SK-N-SH (cell line): ENCODE measurements at regions of chr1 and their contacts with region 1.

Region 1: DNA sequence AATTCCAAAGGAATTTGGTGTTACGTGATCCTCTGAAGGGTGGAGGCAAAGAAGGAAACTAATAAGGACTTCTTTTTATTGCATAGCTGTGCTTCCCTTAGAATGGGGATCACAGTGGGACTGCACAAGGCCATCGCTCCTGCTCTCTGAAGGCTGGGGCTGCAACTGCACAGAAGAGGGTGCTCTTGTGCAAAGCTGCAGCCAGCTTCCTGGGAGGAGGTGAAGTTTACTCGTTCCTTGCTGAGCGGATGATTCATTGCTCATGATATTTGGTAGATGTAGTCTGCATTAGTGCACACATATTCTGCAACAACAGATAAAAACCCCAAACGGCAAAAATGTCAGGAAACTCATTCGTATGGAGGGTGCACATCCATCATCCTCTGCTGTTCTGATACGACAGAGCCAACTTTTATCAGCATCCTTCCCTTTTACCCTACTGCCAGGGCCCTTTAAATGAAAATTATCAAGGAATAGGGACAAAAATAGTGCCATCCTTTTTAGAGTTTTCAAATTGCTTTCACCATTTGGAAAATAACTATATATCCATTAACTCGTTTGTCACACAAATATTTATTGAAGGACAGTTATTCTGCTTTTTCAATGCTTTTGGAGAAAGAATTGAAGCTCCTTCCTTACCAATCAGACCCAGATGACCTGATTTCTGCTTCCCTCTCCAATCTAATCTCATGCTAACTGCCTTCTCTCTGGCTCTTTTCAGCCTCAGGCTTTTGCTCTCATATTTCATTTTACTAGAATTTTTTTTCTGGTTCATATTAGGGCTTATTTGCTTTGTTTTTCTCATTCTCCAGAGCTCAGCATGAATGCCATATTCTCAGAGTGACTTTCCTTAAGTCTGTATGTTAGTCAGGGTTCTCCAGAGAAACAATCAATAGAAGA is 263.6 kb downstream of the DUSP10 start:
- DNase-seq: peak; percentile 58
- H3K4me3 ChIP-seq: peak overlapping the region in 1 of 2 experiments; percentile 4; a peak in 1 of 4 replicates
- H3K27ac ChIP-seq: peak overlapping the region in 1 of 2 experiments; percentile 76; a peak in 2 of 4 replicates
- H3K4me1 ChIP-seq: peaks cover 0 to 14% of the 10 kb centered on the region in 2 experiments; a peak in 2 of 4 replicates
- H3K27me3 ChIP-seq: no peaks in the 10 kb centered on the region
- CTCF ChIP-seq: peak; percentile 87
- EP300 ChIP-seq: peak in 1 of 2 experiments; percentile 48; a peak in 2 of 4 replicates
- RAD21 ChIP-seq: peak; percentile 93

Region 2: DNA sequence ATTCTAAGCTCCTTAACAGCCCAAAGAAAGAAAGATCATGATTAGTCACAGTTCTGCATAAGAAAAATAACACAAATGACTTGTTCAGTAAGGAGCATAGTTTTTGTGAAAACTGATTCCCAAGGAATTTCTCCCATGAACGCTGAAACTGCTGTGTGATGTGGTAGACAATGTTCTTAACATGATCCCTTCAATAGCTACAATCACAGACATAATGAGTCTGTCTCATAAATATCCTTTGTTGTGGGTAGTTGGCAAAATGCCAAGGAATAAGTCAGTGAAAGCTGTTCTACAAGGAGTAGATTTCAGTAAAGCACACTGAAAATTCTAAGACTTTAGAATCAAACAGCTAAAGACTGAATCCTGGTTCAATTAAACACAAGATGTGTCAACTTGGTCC is 194.3 kb before region 1 on chr1:
- CTCF ChIA-PET with region 1: no interaction called
- POLR2A ChIA-PET with region 1: no interaction called
- DNase-seq: peak; percentile 33
- H3K4me3 ChIP-seq: no peak overlapping the region
- H3K27ac ChIP-seq: peak overlapping the region in 1 of 2 experiments; percentile 28; a peak in 2 of 4 replicates
- H3K4me1 ChIP-seq: peaks cover 0 to 4% of the 10 kb centered on the region in 2 experiments; a peak in 2 of 4 replicates
- H3K27me3 ChIP-seq: no peaks in the 10 kb centered on the region
- CTCF ChIP-seq: no peak
- EP300 ChIP-seq: no peak
- RAD21 ChIP-seq: no peak

Region 3: GRCh38 chr1:221444346-221444745 is 34.0 kb before region 1 on chr1:
- CTCF ChIA-PET with region 1: no interaction called
- POLR2A ChIA-PET with region 1: no interaction called
- DNase-seq: no peak
- H3K4me3 ChIP-seq: no peak overlapping the region
- H3K27ac ChIP-seq: no peak overlapping the region
- H3K4me1 ChIP-seq: peaks cover 16 to 20% of the 10 kb centered on the region in 2 experiments; a peak in 3 of 4 replicates
- H3K27me3 ChIP-seq: no peaks in the 10 kb centered on the region
- CTCF ChIP-seq: no peak
- EP300 ChIP-seq: no peak
- RAD21 ChIP-seq: no peak

Region 4: DNA sequence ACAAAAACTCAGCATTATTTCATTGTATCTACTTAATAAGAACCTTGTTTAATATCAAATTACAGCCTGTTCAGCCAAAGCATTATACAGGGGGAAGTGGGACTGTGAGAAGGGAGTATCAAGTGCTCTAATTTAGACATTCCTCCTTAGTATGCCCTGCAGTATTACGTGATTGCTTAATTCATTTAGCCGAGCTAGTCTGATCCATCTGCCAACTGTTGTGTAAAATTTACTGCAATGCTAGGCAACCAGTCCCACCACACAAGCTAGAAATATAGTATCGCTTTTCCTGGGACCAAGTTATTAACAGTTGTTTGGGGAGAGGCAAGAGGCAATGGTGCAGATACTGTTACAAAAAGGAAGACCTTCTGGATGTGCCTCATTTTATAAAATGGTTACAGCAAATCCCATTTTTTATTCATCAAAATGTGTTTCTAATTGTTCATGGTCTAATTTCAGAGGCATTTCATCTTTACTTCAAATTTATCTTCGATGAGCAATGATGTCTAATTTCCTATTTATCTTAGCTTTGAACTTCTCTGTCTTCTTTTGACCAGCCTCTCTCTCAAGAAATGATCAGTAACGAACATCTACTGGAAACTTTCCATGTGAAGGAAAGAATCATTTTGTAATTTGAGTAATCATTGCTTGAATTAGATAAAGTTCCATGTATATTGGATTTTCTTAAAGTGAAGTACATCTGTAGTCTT is 19.7 kb before region 1 on chr1:
- CTCF ChIA-PET with region 1: interaction called, 12 read pairs
- POLR2A ChIA-PET with region 1: no interaction called
- DNase-seq: peak; percentile 44
- H3K4me3 ChIP-seq: peak overlapping the region in 1 of 2 experiments; percentile 6; a peak in 1 of 4 replicates
- H3K27ac ChIP-seq: peak overlapping the region; percentile 82 to 84
- H3K4me1 ChIP-seq: peaks cover 4 to 23% of the 10 kb centered on the region in 2 experiments; a peak in 2 of 4 replicates
- H3K27me3 ChIP-seq: no peaks in the 10 kb centered on the region
- CTCF ChIP-seq: no peak
- EP300 ChIP-seq: peak in 1 of 2 experiments; percentile 64; a peak in 3 of 4 replicates
- RAD21 ChIP-seq: no peak

Region 5: GRCh38 chr1:221497046-221497445 is 18.7 kb after region 1 on chr1:
- CTCF ChIA-PET with region 1: no interaction called
- POLR2A ChIA-PET with region 1: no interaction called
- DNase-seq: no peak
- H3K4me3 ChIP-seq: no peak overlapping the region
- H3K27ac ChIP-seq: no peak overlapping the region
- H3K4me1 ChIP-seq: no peaks in the 10 kb centered on the region; a peak in 1 of 4 replicates
- H3K27me3 ChIP-seq: no peaks in the 10 kb centered on the region
- CTCF ChIP-seq: no peak
- EP300 ChIP-seq: no peak
- RAD21 ChIP-seq: no peak

Region 6: DNA sequence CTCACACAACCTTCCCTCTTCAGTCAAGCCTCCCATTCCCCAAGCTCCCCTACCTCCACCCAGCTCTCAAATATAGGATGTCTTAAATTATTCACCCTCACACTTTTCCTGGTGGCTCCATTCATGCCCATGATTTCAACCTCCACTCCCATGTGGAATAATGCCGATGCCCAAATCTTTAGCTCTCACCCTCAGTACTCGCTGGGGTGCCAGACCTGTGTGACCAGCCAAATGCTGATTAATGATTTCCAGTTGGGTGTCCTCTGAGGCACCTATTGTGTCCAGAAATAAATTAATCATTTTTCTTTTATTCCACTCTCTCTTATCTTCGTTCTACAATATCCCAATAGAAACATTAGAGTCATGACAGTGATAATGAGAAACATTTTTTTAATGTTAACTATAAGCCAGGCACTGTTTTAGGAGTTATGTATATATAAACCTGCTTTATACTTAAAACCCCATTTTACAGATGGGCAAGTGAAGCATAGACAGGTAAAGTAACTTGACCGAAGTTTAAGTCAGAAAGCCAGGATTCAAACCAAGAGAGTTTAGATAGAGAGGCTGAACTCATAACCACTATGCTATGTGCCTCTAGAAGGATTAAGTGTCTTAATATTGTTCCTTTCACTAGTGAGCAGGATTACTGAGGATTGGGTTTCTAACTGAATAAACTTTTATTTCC is 53.9 kb after region 1 on chr1:
- CTCF ChIA-PET with region 1: no interaction called
- POLR2A ChIA-PET with region 1: no interaction called
- DNase-seq: no peak
- H3K4me3 ChIP-seq: no peak overlapping the region
- H3K27ac ChIP-seq: no peak overlapping the region
- H3K4me1 ChIP-seq: no peaks in the 10 kb centered on the region
- H3K27me3 ChIP-seq: no peaks in the 10 kb centered on the region
- CTCF ChIP-seq: no peak
- EP300 ChIP-seq: no peak
- RAD21 ChIP-seq: no peak

Region 7: DNA sequence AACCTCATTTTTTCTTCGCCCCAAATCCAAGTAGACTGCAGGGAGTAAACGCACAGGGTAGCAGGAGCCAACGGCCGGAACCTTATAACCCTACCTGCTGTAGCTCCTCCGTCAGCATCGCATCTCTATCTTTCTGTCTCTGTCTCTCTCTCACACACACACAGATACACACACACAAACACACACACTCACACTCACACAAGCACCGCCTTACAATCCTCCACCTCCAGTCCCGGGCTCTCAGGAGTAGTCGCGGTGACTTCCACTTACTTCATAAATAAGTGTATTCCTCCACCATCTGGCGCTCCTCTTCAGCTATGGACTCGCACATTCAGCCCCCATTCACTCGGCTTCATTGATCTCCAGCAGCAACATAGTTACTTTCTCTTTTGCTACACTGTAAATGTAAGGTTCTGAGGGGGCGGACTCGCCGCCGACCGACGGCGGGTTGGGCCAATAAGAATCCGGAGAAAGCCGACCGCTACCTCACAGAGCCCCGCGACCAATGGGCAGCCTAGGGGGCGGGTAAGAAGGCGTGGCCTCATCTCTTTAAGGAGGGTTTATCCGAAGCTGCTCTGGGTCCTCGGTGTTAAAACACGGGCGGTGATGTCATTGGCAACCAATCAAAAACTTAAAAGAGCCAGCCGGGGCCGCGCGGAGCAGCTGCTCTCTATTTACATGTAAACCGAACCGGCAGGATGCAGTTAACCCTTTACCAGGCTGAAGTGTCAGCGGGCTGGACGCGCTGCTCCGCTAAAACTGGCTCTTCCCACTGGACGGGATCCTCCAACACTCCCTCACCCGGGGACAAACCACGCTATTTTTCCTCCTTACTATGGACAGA is 263.6 kb after region 1 on chr1 and contains the start of gene DUSP10:
- CTCF ChIA-PET with region 1: interaction called, 20 read pairs
- POLR2A ChIA-PET with region 1: interaction called, 13 read pairs
- DNase-seq: peak; percentile 95
- H3K4me3 ChIP-seq: peak within 1 kb of the TSS; percentile 57 to 94
- H3K27ac ChIP-seq: peak within 1 kb of the TSS; percentile 96 to 98
- H3K4me1 ChIP-seq: peaks cover 0 to 19% of the 10 kb centered on the region in 2 experiments; a peak in 2 of 4 replicates
- H3K27me3 ChIP-seq: no peaks in the 10 kb centered on the region
- CTCF ChIP-seq: no peak
- EP300 ChIP-seq: peak; percentile 10 to 30; a peak in 1 of 4 replicates
- RAD21 ChIP-seq: peak; percentile 44
- polyA plus RNA-seq, gene DUSP10: 6.4 and 6.8 TPM in 2 replicates

Region 8: DNA sequence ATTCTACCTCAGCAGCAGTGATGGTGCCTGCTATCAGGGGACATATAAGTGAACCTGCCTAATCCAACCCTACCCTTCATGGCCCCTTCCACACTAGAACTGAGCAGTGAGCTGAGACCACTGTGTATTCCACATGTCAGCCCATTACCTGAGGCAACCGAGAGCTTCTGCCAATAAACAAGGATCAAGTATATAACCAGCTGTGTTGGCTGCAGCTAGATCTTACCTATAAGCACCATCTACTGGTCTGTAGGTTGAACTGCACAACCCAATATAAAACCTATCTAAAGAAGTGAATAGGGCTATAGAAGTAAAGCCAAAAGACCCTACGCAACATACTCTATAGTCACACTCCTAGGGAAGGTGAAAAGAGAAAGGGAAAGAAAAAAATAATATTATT is 692.7 kb after region 1 on chr1:
- CTCF ChIA-PET with region 1: interaction called, 15 read pairs
- POLR2A ChIA-PET with region 1: no interaction called
- DNase-seq: peak; percentile 29
- H3K4me3 ChIP-seq: no peak overlapping the region
- H3K27ac ChIP-seq: no peak overlapping the region
- H3K4me1 ChIP-seq: no peaks in the 10 kb centered on the region
- H3K27me3 ChIP-seq: no peaks in the 10 kb centered on the region
- CTCF ChIP-seq: peak; percentile 64
- EP300 ChIP-seq: no peak
- RAD21 ChIP-seq: peak; percentile 80